Endothelial cell of umbilical vein (primary cell): ENCODE measurements at regions of chr2 and their contacts with region 1.

Region 1: DNA sequence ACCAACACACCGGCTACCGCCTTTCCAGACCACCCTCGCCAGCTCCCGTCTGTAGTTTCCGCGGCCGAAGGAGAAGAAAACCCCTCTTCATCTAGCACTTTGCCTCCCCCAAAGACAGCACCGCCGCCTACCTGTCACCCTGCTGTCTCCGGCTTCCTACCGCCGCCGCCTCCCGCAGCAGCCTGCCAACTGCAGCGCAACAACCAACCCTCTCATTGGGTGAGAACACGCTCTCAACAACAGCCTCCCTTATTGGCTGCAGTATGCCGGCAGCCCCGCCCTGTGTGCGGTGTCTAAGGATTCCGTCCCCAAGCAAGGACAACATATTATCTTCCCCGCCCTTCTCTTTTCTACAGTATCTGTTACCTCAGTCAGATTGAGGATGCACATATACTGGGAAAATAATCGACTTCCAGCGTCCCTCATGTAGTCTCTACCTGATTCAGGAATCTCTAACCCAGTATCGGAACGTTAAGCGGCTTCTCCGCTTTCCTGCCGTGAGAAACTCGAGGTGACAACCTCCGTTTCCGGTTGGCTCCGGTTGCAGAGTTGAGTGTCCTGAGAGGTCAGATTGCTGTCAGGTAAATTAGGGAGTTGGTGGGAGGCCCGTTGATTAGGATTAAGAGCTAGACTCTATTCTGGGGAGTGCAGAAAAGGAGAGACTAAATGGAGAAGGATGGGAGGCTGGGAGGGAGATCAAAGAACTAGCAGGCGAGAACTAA is at the starts of genes HYCC2 and NDUFB3:
- DNase-seq: peak; percentile 96
- H3K4me3 ChIP-seq: peak within 1 kb of the TSS; percentile 94 to 99 (median 94)
- H3K27ac ChIP-seq: peak within 1 kb of the TSS; percentile 94
- H3K4me1 ChIP-seq: peaks cover 34% of the 10 kb centered on the region
- H3K27me3 ChIP-seq: no peaks in the 10 kb centered on the region
- CTCF ChIP-seq: no peak
- POLR2A ChIP-seq: peak; percentile 38
- total RNA-seq, gene HYCC2: 20.3 and 21.2 TPM in 2 replicates
- total RNA-seq, gene NDUFB3: 96.7 and 101 TPM in 2 replicates

Region 2: DNA sequence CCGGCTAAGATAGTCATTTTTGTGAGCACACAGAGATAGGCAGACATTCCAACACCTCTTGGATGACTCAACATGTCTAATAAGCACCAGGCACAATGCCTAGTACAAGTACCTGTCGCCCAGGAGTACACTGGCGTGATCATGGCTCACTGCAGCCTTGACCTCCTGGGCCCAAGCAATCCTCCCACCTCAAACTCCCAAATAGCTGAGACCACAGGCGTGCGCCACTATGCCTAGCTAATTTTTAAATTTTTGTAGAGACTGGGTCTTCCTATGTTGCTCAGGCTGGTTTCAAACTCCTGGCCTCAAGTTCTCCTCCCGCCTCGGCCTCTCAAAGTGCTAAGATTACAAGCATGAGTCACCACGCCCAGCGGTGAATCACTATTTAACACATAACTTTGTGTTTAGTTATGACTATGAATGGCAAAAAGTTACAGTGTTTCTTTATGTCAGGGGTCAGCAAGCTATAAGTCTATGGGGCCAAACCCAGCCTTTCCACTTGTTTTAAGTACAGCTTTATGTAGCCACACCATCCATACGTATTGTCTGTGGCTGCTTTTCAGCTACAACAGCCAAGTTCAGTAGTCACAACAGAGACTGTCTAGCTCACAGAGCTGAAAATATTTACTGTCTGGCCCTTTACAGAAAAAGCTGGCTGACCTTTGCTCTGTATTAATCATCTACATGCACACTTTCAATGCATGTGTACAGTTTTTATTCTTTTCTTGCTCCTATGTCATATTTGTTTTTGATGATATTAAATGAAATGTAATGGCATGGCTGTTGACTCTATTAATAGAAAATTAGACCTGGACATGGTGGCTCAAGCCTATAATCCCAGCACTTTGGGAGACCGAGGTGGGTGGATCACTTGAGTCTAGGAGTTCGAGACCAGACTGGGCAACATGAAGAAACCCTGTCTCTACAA is 126.9 kb before region 1 on chr2:
- CTCF ChIA-PET with region 1: interaction called, 16 read pairs
- POLR2A ChIA-PET with region 1: no interaction called
- dilution Hi-C with region 1: no loop called
- intact Hi-C with region 1: no loop called
- DNase-seq: peak; percentile 91
- H3K4me3 ChIP-seq: no peak overlapping the region
- H3K27ac ChIP-seq: peak overlapping the region; percentile 85
- H3K4me1 ChIP-seq: peaks cover 14% of the 10 kb centered on the region
- H3K27me3 ChIP-seq: no peaks in the 10 kb centered on the region
- CTCF ChIP-seq: no peak
- POLR2A ChIP-seq: no peak

Region 3: DNA sequence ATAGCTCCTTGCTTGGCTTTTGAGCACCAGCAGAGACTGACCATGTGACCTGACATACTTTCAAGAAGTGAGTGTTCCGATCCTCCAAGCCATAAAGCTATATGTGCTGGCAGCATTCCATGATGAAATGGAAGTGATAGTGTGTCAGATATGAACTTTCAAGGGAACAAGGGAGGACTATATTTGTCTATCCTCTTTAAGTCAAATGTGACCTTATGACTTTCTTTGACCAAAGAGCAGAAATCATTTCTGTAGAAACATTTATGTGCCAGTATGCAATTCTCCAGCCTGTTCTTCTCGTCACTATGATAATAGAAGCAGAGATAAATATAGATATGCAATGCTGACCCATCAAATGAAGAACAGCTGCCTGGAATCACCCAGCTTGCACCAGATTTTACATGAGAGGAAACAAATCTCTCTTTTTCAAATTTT is 14.5 kb before region 1 on chr2:
- CTCF ChIA-PET with region 1: interaction called, 17 read pairs
- POLR2A ChIA-PET with region 1: no interaction called
- dilution Hi-C with region 1: no loop called
- intact Hi-C with region 1: no loop called
- DNase-seq: no peak
- H3K4me3 ChIP-seq: no peak overlapping the region
- H3K27ac ChIP-seq: no peak overlapping the region
- H3K4me1 ChIP-seq: peaks cover 5% of the 10 kb centered on the region
- H3K27me3 ChIP-seq: no peaks in the 10 kb centered on the region
- CTCF ChIP-seq: no peak
- POLR2A ChIP-seq: no peak

Region 4: GRCh38 chr2:201118121-201118960 is 46.7 kb after region 1 on chr2:
- CTCF ChIA-PET with region 1: interaction called, 9 read pairs
- POLR2A ChIA-PET with region 1: interaction called, 3 read pairs
- dilution Hi-C with region 1: no loop called
- intact Hi-C with region 1: loop called (anchors 1 kb)
- DNase-seq: peak; percentile 90
- H3K4me3 ChIP-seq: peak overlapping the region; percentile 77 to 99 (median 77)
- H3K27ac ChIP-seq: peak overlapping the region; percentile 88
- H3K4me1 ChIP-seq: peaks cover 60% of the 10 kb centered on the region
- H3K27me3 ChIP-seq: no peaks in the 10 kb centered on the region
- CTCF ChIP-seq: peak; percentile 20 to 66
- POLR2A ChIP-seq: peak; percentile 67

Region 5: GRCh38 chr2:201158111-201158929 is 86.7 kb after region 1 on chr2:
- CTCF ChIA-PET with region 1: interaction called, 43 read pairs
- POLR2A ChIA-PET with region 1: no interaction called
- dilution Hi-C with region 1: no loop called
- intact Hi-C with region 1: loop called (anchors 1 kb)
- DNase-seq: peak; percentile 89
- H3K4me3 ChIP-seq: no peak overlapping the region
- H3K27ac ChIP-seq: peak overlapping the region; percentile 54
- H3K4me1 ChIP-seq: peaks cover 14% of the 10 kb centered on the region
- H3K27me3 ChIP-seq: no peaks in the 10 kb centered on the region
- CTCF ChIP-seq: peak; percentile 64 to 77
- POLR2A ChIP-seq: no peak

Region 6: GRCh38 chr2:201257956-201258665 is 186.5 kb after region 1 on chr2:
- CTCF ChIA-PET with region 1: no interaction called
- POLR2A ChIA-PET with region 1: no interaction called
- dilution Hi-C with region 1: no loop called
- intact Hi-C with region 1: no loop called
- DNase-seq: peak; percentile 84
- H3K4me3 ChIP-seq: peak overlapping the region; percentile 43 to 80 (median 78)
- H3K27ac ChIP-seq: peak overlapping the region; percentile 98
- H3K4me1 ChIP-seq: peaks cover 30% of the 10 kb centered on the region
- H3K27me3 ChIP-seq: no peaks in the 10 kb centered on the region
- CTCF ChIP-seq: no peak
- POLR2A ChIP-seq: peak; percentile 31